GM18951 (cell line): ENCODE measurements at regions of chr16 and their contacts with region 1.

Region 1: GRCh38 chr16:71412270-71413160 is 29.3 kb downstream of the TLE7 start:
- POLR2A ChIP-seq: no peak

Region 2: DNA sequence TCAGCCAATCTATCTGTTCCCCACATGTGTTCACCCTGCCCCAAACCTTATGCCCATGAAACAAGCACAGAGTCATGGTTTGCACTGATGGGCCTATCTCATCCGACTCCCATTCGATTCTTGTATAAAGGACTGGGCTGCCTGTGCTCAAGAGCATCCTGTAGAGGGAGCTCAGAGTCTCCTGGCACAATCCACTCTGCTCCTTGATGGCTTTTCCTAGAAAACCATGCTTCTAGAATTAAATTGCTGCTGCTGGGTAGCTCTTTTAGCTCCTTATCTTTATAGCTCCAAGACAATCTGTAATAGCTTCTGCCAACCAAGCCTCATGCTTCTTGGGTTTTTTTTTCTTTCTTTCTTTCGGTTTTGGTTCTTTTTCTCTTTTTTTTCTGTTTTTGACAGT is 66.9 kb after region 1 on chr16:
- in situ Hi-C with region 1: no loop called
- POLR2A ChIP-seq: no peak

Region 3: GRCh38 chr16:71499775-71500364 is 87.4 kb after region 1 on chr16:
- in situ Hi-C with region 1: loop called (anchors 5 kb)
- POLR2A ChIP-seq: no peak

Region 4: GRCh38 chr16:71610936-71611871 is 198.7 kb after region 1 on chr16:
- in situ Hi-C with region 1: loop called (anchors 25 kb)
- POLR2A ChIP-seq: no peak